ENCODE measurements at regions of chr3 and their contacts with region 1.

Region 1: GRCh38 chr3:12948891-12949711 is 107.7 kb upstream of the RPL32 start:
- DNase-seq: no peak
- H3K4me3 ChIP-seq: no peak overlapping the region
- H3K27ac ChIP-seq: peak overlapping the region in 56 of 59 donors; percentile 19 to 100 (median 96)
- H3K27me3 ChIP-seq: no peaks in the 10 kb centered on the region
- CTCF ChIP-seq: peak in 9 of 56 donors; percentile 5 to 16 (median 9)

Region 2: DNA sequence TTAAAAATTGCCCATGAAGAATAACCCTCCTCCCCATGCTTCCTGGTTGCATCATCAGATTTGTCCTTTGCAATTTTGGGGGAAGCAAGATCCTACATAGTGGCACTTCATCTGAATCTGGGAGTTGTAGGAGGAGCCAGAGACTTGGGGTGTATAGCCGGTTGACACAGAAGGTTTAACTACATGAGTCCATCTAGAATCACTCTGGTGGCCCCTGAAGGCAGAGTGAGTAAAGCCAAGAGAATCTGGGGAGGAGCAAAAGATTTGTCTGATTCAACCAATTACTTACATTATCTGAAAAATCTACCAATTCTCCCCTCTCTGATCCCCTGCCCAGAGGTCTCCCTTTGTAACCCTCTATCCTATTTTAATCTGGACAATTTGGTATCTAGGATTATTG is 894.8 kb before region 1 on chr3:
- intact Hi-C with region 1: no loop called
- DNase-seq: no peak
- H3K4me3 ChIP-seq: no peak overlapping the region
- H3K27ac ChIP-seq: no peak overlapping the region
- H3K27me3 ChIP-seq: peaks cover 0 to 6% (median 0%) of the 10 kb centered on the region in 45 donors
- CTCF ChIP-seq: no peak

Region 3: DNA sequence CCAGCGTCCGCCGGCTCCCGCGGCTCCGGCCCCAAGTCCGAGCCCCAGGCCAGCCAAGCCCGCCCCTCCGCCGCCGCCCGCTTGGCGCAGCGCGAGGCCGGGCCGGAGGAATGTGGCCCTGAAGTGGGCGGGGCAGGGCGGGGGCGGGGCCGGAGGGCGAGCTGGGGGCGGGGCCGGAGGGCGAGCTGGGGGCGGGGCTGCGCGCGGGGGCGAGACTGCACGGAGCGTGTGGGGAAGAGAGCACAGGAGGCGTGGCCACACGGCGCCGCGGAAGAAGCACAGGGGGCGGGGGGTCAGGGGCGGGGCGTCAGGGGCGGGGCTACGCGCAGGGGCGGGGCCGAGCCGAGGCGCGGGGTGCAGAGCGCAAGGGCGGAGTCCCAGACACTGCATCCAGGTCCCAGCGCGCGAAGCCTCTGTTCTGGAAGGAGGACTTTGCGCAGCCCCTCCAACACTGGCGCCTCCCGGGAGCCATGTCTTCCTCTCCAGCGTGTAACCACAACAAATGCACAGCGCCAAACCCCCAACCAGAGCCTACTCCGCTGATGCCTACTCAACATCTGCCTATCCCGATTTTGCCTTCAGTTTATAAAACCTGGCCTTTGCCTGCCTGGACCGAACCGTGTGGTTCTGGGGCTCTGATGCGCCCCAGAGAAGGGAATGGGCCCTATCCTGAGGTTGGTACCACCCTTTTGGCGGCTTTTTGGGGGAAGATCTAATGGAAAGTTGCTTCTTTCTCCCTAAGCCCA is 18.7 kb after region 1 on chr3:
- intact Hi-C with region 1: loop called in 1 of 2 experiments (anchors 2 kb)
- DNase-seq: peak; percentile 60 to 88 (median 78)
- H3K4me3 ChIP-seq: peak overlapping the region; percentile 37 to 86 (median 71)
- H3K27ac ChIP-seq: peak overlapping the region in 48 of 59 donors; percentile 4 to 86 (median 74)
- H3K27me3 ChIP-seq: no peaks in the 10 kb centered on the region
- CTCF ChIP-seq: peak in 5 of 56 donors; percentile 5 to 18 (median 12)

Region 4: GRCh38 chr3:12974819-12975218 is 25.7 kb after region 1 on chr3:
- intact Hi-C with region 1: loop called in 1 of 2 experiments (anchors 5 kb)
- DNase-seq: no peak
- H3K4me3 ChIP-seq: no peak overlapping the region
- H3K27ac ChIP-seq: peak overlapping the region in 1 of 59 donors; percentile 10
- H3K27me3 ChIP-seq: no peaks in the 10 kb centered on the region
- CTCF ChIP-seq: no peak

Measured in dorsolateral prefrontal cortex (tissue), 120 donors.